Naive thymus-derived CD4-positive, alpha-beta T cell (primary cell): ENCODE measurements at regions of chr3 and their contacts with region 1.

Region 1: DNA sequence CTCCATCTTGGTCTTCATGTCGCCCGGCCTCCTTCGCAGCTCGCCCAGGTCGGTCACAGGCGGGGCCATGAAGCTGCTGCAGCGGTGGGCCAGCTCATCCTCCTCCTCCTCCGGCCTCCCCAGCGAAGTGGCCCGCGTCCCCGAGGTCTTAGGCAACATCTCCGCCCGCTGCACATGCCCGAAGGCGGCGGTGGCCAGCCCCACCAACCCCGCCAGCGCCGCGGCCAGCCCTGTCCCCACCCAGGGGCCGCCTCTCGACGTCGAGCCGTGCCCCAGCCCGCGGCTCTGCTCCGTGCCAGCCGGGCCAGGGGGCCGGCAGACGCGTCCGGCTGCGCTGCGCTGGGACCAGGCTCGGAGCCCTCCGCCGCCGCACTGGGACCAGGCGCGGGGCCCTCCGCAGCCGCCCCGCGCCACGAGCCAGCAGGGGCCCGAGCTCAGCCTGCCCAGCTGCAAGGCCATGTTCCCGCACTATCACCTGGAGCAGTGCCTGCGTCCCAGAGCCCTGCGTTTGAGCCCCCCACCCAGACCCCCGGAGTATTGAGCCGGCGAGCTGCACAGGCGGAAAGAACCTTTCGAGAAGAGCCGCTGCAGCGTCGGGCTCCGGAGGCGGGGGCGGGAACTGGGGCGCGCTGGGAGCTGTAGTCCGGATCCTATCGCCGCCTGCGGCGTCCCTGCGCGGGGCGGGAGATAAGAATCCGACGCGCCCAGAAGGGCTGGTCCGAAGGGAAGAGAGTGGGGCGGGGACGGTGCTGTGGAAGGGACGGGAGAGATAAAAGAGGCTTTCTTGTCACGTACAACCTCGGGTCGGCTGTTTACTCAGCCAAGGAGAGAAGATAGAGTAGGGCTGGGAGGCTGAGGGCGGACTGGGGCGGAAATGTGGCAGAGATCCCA is at the start of gene CPOX:
- DNase-seq: peak; percentile 62 to 85 (median 73)
- ATAC-seq: peak; percentile 95
- H3K4me3 ChIP-seq: peak within 1 kb of the TSS; percentile 85
- H3K4me3 Mint-ChIP-seq: peak within 1 kb of the TSS; percentile 91 to 99 (median 98)
- H3K27ac ChIP-seq: peak within 1 kb of the TSS; percentile 69
- H3K27ac Mint-ChIP-seq: peak within 1 kb of the TSS; percentile 87 to 98 (median 95)
- H3K4me1 ChIP-seq: peaks cover 11% of the 10 kb centered on the region in 2 donors
- H3K4me1 Mint-ChIP-seq: peaks cover 30 to 52% (median 40%) of the 10 kb centered on the region in 7 donors
- H3K27me3 ChIP-seq: no peaks in the 10 kb centered on the region
- H3K27me3 Mint-ChIP-seq: no peaks in the 10 kb centered on the region
- total RNA-seq, gene CPOX: 11.4 to 67.5 (median 21.6) TPM

Region 2: DNA sequence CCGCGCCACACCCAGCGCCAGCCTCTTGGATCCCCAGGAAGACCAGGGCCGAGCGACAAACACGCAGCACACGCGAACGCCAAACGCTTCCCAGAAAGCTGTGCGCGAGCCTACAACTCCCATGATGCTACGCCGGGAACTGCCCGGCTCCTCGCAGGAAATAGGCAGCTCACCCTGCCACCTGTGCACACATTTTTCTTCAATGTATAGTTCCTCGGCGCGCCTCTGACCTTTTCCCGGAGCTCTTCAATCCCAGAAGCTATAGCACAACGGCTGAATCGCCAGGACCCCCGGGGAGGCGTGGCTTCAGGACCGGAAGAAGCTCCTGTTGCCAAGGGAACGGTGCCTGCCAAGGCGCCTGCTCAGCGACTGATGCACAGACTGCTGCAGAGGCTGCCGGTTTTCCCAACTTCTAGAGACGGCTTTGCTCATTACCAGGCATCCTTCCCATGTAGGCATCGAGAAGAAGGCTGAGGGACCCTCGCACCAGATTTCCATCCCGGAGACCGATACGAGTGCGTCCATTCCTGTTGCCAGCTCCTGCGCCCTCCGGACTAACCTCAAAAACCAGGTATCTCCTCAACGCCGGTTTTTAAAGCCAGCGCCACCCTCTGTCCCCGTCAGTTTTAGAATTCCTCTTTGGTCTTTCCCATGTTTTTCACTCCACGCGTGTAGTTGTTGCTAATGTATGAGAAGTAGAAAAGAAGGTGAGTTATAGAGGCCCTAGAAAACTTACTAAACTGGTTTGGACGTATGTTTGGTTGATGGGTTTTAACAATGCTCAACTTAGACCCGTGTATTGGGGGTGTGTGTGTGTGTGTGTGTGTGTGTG is 828.7 kb before region 1 on chr3 and contains the start of gene ARL6:
- CTCF ChIA-PET with region 1: interaction called, 3 read pairs
- POLR2A ChIA-PET with region 1: no interaction called
- intact Hi-C with region 1: loop called (anchors 1 kb)
- DNase-seq: peak; percentile 53 to 78 (median 73)
- ATAC-seq: peak; percentile 95
- H3K4me3 ChIP-seq: peak within 1 kb of the TSS; percentile 98
- H3K4me3 Mint-ChIP-seq: peak within 1 kb of the TSS; percentile 91 to 99 (median 98)
- H3K27ac ChIP-seq: peak within 1 kb of the TSS; percentile 78
- H3K27ac Mint-ChIP-seq: peak within 1 kb of the TSS; percentile 90 to 97 (median 93)
- H3K4me1 ChIP-seq: peaks cover 5 to 15% of the 10 kb centered on the region in 2 donors
- H3K4me1 Mint-ChIP-seq: peaks cover 9 to 36% (median 27%) of the 10 kb centered on the region in 7 donors
- H3K27me3 ChIP-seq: no peaks in the 10 kb centered on the region
- H3K27me3 Mint-ChIP-seq: peaks cover 0 to 4% (median 0%) of the 10 kb centered on the region in 5 donors
- total RNA-seq, gene ARL6: 3.0 to 7.5 (median 5.8) TPM

Region 3: GRCh38 chr3:98329392-98330124 is 263.7 kb before region 1 on chr3:
- CTCF ChIA-PET with region 1: no interaction called
- POLR2A ChIA-PET with region 1: no interaction called
- intact Hi-C with region 1: loop called in 1 of 2 experiments (anchors 5 kb)
- DNase-seq: peak in 8 of 9 donors; percentile 9 to 48 (median 34)
- ATAC-seq: peak; percentile 83
- H3K4me3 ChIP-seq: no peak overlapping the region
- H3K4me3 Mint-ChIP-seq: no peak overlapping the region
- H3K27ac ChIP-seq: no peak overlapping the region
- H3K27ac Mint-ChIP-seq: peak overlapping the region in 1 of 9 donors; percentile 8
- H3K4me1 ChIP-seq: no peaks in the 10 kb centered on the region
- H3K4me1 Mint-ChIP-seq: peaks cover 0 to 25% (median 0%) of the 10 kb centered on the region in 7 donors
- H3K27me3 ChIP-seq: no peaks in the 10 kb centered on the region
- H3K27me3 Mint-ChIP-seq: peaks cover 16 to 66% (median 32%) of the 10 kb centered on the region in 5 donors

Region 4: GRCh38 chr3:98556164-98557130 is 36.8 kb before region 1 on chr3:
- CTCF ChIA-PET with region 1: no interaction called
- POLR2A ChIA-PET with region 1: interaction called, 4 read pairs
- intact Hi-C with region 1: loop called in 1 of 2 experiments (anchors 1 kb)
- DNase-seq: peak in 2 of 9 donors; percentile 19 to 58
- ATAC-seq: peak; percentile 77
- H3K4me3 ChIP-seq: no peak overlapping the region
- H3K4me3 Mint-ChIP-seq: peak overlapping the region in 3 of 10 donors; percentile 9 to 83 (median 30)
- H3K27ac ChIP-seq: no peak overlapping the region
- H3K27ac Mint-ChIP-seq: peak overlapping the region in 5 of 9 donors; percentile 5 to 98 (median 40)
- H3K4me1 ChIP-seq: peaks cover 0 to 56% of the 10 kb centered on the region in 2 donors
- H3K4me1 Mint-ChIP-seq: peaks cover 6 to 84% (median 23%) of the 10 kb centered on the region in 7 donors
- H3K27me3 ChIP-seq: no peaks in the 10 kb centered on the region
- H3K27me3 Mint-ChIP-seq: peaks cover 0 to 5% (median 0%) of the 10 kb centered on the region in 5 donors

Region 5: DNA sequence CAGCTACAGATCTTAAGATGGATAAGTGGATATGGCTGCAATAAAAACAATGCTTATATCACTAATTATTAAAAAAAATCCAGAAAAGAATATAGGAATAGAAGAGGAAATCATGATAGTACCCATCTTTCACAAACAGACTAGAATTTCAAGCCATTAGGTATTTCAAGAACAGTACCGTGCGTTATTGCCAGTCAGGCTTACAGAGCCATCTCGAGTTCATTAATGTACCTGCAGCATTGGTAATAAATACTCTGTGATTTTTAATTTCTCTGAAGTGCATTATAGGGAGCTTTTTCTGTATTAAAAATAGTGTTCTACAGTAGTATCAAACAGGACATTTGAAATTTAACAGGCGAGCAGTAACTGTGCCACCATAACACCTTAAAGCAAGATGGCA is 205.5 kb after region 1 on chr3:
- CTCF ChIA-PET with region 1: no interaction called
- POLR2A ChIA-PET with region 1: no interaction called
- intact Hi-C with region 1: no loop called
- DNase-seq: no peak
- ATAC-seq: no peak
- H3K4me3 ChIP-seq: no peak overlapping the region
- H3K4me3 Mint-ChIP-seq: no peak overlapping the region
- H3K27ac ChIP-seq: no peak overlapping the region
- H3K27ac Mint-ChIP-seq: no peak overlapping the region
- H3K4me1 ChIP-seq: no peaks in the 10 kb centered on the region
- H3K4me1 Mint-ChIP-seq: no peaks in the 10 kb centered on the region
- H3K27me3 ChIP-seq: no peaks in the 10 kb centered on the region
- H3K27me3 Mint-ChIP-seq: peaks cover 0 to 4% (median 0%) of the 10 kb centered on the region in 5 donors

Region 6: DNA sequence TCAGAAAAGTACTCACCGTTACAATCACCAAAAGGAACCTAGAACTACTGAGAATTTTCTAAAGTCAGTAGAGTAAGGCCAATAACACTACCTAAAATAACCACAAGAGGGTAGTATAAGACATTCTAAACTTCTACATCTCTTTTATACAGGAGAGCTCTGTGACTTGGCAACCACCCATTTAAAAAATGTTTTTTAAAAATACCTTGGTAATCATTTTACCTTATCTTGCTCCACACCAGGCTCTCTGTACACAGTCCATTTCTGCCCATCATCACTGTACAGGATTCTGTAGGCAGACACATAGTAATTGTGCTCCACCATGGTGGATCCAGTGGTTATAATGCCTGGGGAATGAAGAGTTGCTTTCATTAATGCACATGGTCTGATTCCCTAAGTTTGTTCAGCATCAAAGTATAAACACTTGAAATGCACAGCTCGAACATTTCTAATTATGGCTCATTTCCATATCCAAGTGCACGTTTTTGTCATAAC is 224.3 kb after region 1 on chr3:
- CTCF ChIA-PET with region 1: interaction called, 3 read pairs
- POLR2A ChIA-PET with region 1: no interaction called
- intact Hi-C with region 1: loop called in 1 of 2 experiments (anchors 1 kb)
- DNase-seq: peak in 6 of 9 donors; percentile 12 to 54 (median 40)
- ATAC-seq: peak; percentile 83
- H3K4me3 ChIP-seq: no peak overlapping the region
- H3K4me3 Mint-ChIP-seq: no peak overlapping the region
- H3K27ac ChIP-seq: no peak overlapping the region
- H3K27ac Mint-ChIP-seq: no peak overlapping the region
- H3K4me1 ChIP-seq: no peaks in the 10 kb centered on the region
- H3K4me1 Mint-ChIP-seq: peaks cover 0 to 6% (median 1%) of the 10 kb centered on the region in 7 donors
- H3K27me3 ChIP-seq: no peaks in the 10 kb centered on the region
- H3K27me3 Mint-ChIP-seq: no peaks in the 10 kb centered on the region

Region 7: GRCh38 chr3:99817437-99818240 is 1224.3 kb after region 1 on chr3 and contains the start of gene CMSS1:
- CTCF ChIA-PET with region 1: interaction called, 6 read pairs
- POLR2A ChIA-PET with region 1: no interaction called
- intact Hi-C with region 1: loop called in 1 of 2 experiments (anchors 5 kb)
- DNase-seq: peak; percentile 96 to 98 (median 97)
- ATAC-seq: peak; percentile 94
- H3K4me3 ChIP-seq: peak within 1 kb of the TSS; percentile 80
- H3K4me3 Mint-ChIP-seq: peak within 1 kb of the TSS; percentile 84 to 99 (median 95)
- H3K27ac ChIP-seq: peak within 1 kb of the TSS; percentile 90
- H3K27ac Mint-ChIP-seq: peak within 1 kb of the TSS; percentile 93 to 100 (median 100)
- H3K4me1 ChIP-seq: peaks cover 18 to 22% of the 10 kb centered on the region in 2 donors
- H3K4me1 Mint-ChIP-seq: peaks cover 19 to 62% (median 41%) of the 10 kb centered on the region in 7 donors
- H3K27me3 ChIP-seq: no peaks in the 10 kb centered on the region
- H3K27me3 Mint-ChIP-seq: no peaks in the 10 kb centered on the region
- total RNA-seq, gene CMSS1: 14.9 to 47.7 (median 18.2) TPM